CD4-positive, alpha-beta T cell (primary cell): ENCODE measurements at regions of chr10 and their contacts with region 1.

Region 1: DNA sequence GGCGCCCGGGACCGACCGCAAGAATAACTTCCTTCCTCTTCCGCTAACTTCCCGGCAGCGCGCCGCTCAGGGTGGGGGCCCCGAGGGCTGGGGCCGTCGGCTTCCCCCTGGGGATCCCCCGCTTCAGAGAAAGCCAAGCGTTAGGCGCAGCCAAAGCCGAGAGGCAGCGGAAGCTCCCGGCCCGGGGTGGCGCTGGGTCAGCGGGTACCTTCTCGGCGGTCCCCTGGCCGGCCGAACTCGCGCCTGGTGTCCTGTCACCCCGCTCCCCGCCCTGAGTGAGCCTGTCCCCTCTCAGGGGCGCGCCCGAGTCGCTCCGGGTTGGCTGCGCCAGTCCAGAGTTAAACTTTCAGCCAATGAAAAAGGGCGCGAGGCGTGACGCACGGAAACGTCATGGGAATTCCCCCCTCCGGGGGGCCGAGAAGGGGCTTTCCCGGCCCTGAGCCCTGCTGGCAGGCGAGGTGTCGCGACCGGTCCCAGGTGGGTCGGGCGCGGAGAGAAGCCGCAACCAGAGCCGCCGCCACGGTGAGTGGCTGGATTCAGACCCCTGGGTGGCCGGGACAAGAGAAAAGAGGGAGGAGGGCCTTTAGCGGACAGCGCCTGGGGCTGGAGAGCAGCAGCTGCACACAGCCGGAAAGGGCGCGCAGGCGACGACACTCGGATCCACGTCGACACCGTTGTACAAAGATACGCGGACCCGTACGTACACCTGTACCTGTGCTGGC is 1.3 kb upstream of the NFKB2 start:
- DNase-seq: peak; percentile 95 to 99 (median 98)
- ATAC-seq: peak; percentile 72
- H3K4me3 ChIP-seq: peak overlapping the region; percentile 64
- H3K4me3 Mint-ChIP-seq: peak overlapping the region; percentile 92
- H3K27ac ChIP-seq: peak overlapping the region; percentile 97 to 100
- H3K27ac Mint-ChIP-seq: peak overlapping the region; percentile 100
- H3K4me1 ChIP-seq: peaks cover 57% of the 10 kb centered on the region
- H3K4me1 Mint-ChIP-seq: peaks cover 47% of the 10 kb centered on the region
- H3K27me3 ChIP-seq: no peaks in the 10 kb centered on the region
- H3K27me3 Mint-ChIP-seq: no peaks in the 10 kb centered on the region
- CTCF ChIP-seq: peak; percentile 12

Region 2: GRCh38 chr10:102384053-102384452 is 10.2 kb before region 1 on chr10:
- CTCF ChIA-PET with region 1: interaction called, 10 read pairs
- POLR2A ChIA-PET with region 1: interaction called, 11 read pairs
- intact Hi-C with region 1: no loop called
- DNase-seq: peak in 3 of 14 experiments; percentile 26 to 57 (median 48)
- ATAC-seq: no peak
- H3K4me3 ChIP-seq: no peak overlapping the region
- H3K4me3 Mint-ChIP-seq: no peak overlapping the region
- H3K27ac ChIP-seq: no peak overlapping the region
- H3K27ac Mint-ChIP-seq: no peak overlapping the region
- H3K4me1 ChIP-seq: no peaks in the 10 kb centered on the region
- H3K4me1 Mint-ChIP-seq: no peaks in the 10 kb centered on the region
- H3K27me3 ChIP-seq: no peaks in the 10 kb centered on the region
- H3K27me3 Mint-ChIP-seq: no peaks in the 10 kb centered on the region
- CTCF ChIP-seq: no peak

Region 3: GRCh38 chr10:102432162-102432950 is 38.1 kb after region 1 on chr10 and contains the start of gene CUEDC2:
- CTCF ChIA-PET with region 1: interaction called, 10 read pairs
- POLR2A ChIA-PET with region 1: interaction called, 33 read pairs
- intact Hi-C with region 1: no loop called
- DNase-seq: peak; percentile 90 to 97 (median 96)
- ATAC-seq: peak; percentile 93
- H3K4me3 ChIP-seq: peak within 1 kb of the TSS; percentile 72
- H3K4me3 Mint-ChIP-seq: peak within 1 kb of the TSS; percentile 95
- H3K27ac ChIP-seq: peak within 1 kb of the TSS; percentile 23 to 37
- H3K27ac Mint-ChIP-seq: peak within 1 kb of the TSS; percentile 92
- H3K4me1 ChIP-seq: peaks cover 57% of the 10 kb centered on the region
- H3K4me1 Mint-ChIP-seq: peaks cover 56% of the 10 kb centered on the region
- H3K27me3 ChIP-seq: no peaks in the 10 kb centered on the region
- H3K27me3 Mint-ChIP-seq: no peaks in the 10 kb centered on the region
- CTCF ChIP-seq: no peak
- total RNA-seq, gene CUEDC2: 25.5 to 25.6 TPM

Region 4: GRCh38 chr10:102461187-102462054 is 67.2 kb after region 1 on chr10:
- CTCF ChIA-PET with region 1: no interaction called
- POLR2A ChIA-PET with region 1: interaction called, 22 read pairs
- intact Hi-C with region 1: no loop called
- DNase-seq: peak; percentile 87 to 97 (median 93)
- ATAC-seq: peak; percentile 100
- H3K4me3 ChIP-seq: peak overlapping the region; percentile 72
- H3K4me3 Mint-ChIP-seq: peak overlapping the region; percentile 92
- H3K27ac ChIP-seq: peak overlapping the region in 1 of 2 donors; percentile 38
- H3K27ac Mint-ChIP-seq: peak overlapping the region; percentile 70
- H3K4me1 ChIP-seq: peaks cover 28% of the 10 kb centered on the region
- H3K4me1 Mint-ChIP-seq: peaks cover 29% of the 10 kb centered on the region
- H3K27me3 ChIP-seq: no peaks in the 10 kb centered on the region
- H3K27me3 Mint-ChIP-seq: no peaks in the 10 kb centered on the region
- CTCF ChIP-seq: no peak

Region 5: GRCh38 chr10:102583435-102584417 is 189.5 kb after region 1 on chr10:
- CTCF ChIA-PET with region 1: interaction called, 3 read pairs
- POLR2A ChIA-PET with region 1: interaction called, 9 read pairs
- intact Hi-C with region 1: loop called (anchors 2 to 5 kb)
- DNase-seq: peak; percentile 71 to 90 (median 78)
- ATAC-seq: peak; percentile 99
- H3K4me3 ChIP-seq: no peak overlapping the region
- H3K4me3 Mint-ChIP-seq: no peak overlapping the region
- H3K27ac ChIP-seq: no peak overlapping the region
- H3K27ac Mint-ChIP-seq: peak overlapping the region; percentile 28
- H3K4me1 ChIP-seq: peaks cover 10% of the 10 kb centered on the region
- H3K4me1 Mint-ChIP-seq: peaks cover 16% of the 10 kb centered on the region
- H3K27me3 ChIP-seq: no peaks in the 10 kb centered on the region
- H3K27me3 Mint-ChIP-seq: no peaks in the 10 kb centered on the region
- CTCF ChIP-seq: peak; percentile 90